ENCODE measurements at regions of chr20 and their contacts with region 1.

Region 1: GRCh38 chr20:62536871-62537401 is 61.1 kb upstream of the GATA5 start:
- DNase-seq: no peak
- ATAC-seq: no peak
- H3K4me3 ChIP-seq: no peak overlapping the region
- H3K27ac ChIP-seq: no peak overlapping the region
- H3K4me1 ChIP-seq: no peaks in the 10 kb centered on the region
- CTCF ChIP-seq: no peak
- EP300 ChIP-seq: no peak
- POLR2A ChIP-seq: no peak
- RAD21 ChIP-seq: no peak

Region 2: DNA sequence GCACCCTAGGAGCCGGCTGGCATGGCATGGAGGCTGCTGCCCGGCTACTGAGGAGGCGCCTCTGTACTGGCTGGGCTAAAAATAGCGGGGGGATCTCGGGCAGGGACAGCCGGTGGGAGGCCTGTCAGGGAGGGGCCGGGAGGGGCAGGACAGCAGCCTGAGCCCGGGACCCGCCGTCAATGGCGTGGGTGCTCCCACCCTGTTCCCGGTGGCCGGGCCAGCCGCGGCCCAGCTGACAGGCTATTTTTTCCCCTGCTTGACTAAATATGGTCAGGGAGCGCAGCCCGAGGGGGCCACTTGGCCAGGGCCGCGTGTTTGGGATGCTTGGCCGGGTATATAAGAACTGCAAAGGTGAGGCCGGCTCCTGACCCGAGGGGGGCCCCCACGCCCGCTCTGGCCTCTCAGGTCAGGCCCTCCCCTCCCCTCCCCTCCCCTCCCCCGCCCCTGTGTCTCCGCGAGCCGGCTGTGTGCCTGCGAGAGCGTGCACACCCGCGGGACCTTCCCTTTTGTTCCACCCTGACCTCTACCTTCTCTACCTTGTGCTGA is 13.2 kb after region 1 on chr20:
- CTCF ChIA-PET with region 1: interaction called, 11 read pairs
- POLR2A ChIA-PET with region 1: no interaction called
- DNase-seq: peak in 1 of 2 experiments; percentile 20
- ATAC-seq: peak; percentile 25 to 71; a peak in 4 of 6 replicates
- H3K4me3 ChIP-seq: peak overlapping the region; percentile 46
- H3K27ac ChIP-seq: peak overlapping the region in 1 of 2 experiments; percentile 31; a peak in 3 of 6 replicates
- H3K4me1 ChIP-seq: peaks cover 20% of the 10 kb centered on the region
- CTCF ChIP-seq: no peak
- EP300 ChIP-seq: no peak
- POLR2A ChIP-seq: no peak
- RAD21 ChIP-seq: no peak

Region 3: DNA sequence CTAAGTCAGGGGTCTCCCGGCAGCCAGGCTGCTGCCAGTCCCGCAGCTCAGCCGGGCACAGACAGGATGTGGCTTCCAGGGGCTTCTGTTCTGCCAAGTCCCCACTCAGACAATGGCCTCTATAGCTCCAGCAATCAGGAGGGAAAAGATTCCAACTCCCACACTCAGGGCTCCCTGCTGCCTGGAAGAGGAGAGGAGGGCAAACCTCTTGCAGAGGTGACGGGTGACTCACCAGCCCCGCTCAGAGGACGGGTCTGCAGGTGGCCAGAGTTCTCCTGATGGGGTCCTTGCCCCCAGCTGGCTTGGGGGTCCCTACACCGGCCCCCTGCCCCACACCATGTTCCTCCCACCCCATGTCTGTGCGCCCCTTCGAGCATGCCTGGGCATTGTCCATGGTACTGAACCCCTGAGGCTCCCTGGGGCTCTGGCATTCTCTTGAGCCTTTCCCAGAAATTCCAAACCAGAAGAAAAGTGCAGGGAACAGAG is 204.3 kb after region 1 on chr20:
- CTCF ChIA-PET with region 1: no interaction called
- POLR2A ChIA-PET with region 1: no interaction called
- DNase-seq: no peak
- ATAC-seq: peak in 1 of 2 experiments; percentile 15; a peak in 2 of 6 replicates
- H3K4me3 ChIP-seq: no peak overlapping the region
- H3K27ac ChIP-seq: peak overlapping the region; percentile 78 to 86; a peak in 5 of 6 replicates
- H3K4me1 ChIP-seq: peaks cover 21% of the 10 kb centered on the region
- CTCF ChIP-seq: no peak
- EP300 ChIP-seq: no peak
- POLR2A ChIP-seq: no peak
- RAD21 ChIP-seq: no peak

Measured in A549 (cell line).